ENCODE measurements at regions of chr17 and their contacts with region 1.

Region 1: DNA sequence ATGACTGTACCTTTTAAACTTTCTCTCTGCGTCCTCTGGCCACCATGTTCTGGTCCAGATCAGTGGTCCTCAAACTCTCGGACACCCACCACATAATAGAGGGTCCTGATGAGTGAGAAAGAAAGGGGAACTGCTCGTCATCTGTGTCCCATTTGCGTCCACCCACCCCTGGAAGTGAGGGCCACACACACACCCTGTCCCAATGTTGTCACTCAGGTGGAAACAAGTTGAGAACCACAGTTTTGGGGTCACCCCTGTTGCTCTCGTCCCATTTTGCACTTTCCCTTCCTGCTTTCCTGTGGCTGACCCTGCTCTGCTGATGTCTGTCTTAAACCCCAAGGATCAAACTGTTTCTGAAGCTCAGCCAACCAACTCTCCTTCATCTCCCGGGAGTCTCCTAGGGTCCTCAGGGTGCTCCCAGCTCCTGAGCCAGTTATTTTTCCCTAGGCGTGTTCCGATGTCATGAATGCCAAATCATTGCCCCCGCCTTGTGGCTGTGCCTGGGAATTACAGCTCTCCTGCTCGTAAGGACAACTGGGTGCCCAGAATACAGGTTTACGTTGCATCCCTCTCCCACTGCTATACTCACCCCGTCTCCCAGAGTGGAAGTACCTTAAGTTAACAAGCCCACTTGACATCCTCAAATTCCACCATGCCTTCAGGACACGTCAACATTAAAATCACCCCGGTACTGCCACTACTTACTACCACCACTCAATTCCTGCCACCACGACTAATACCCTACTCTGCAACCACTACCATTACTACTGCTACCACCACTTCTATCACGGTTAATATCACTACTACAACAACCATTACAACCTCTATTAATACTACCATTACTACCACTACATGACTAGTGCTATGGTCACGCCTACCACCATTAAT is 26.0 kb upstream of the HNF1B start:
- DNase-seq: peak; percentile 44
- ATAC-seq: peak; percentile 91
- H3K4me3 ChIP-seq: no peak overlapping the region
- H3K27ac ChIP-seq: no peak overlapping the region
- H3K4me1 ChIP-seq: peaks cover 0 to 7% of the 10 kb centered on the region in 2 experiments; a peak in 1 of 4 replicates
- H3K27me3 ChIP-seq: no peaks in the 10 kb centered on the region
- CTCF ChIP-seq: peak; percentile 74 to 84 (median 81)
- POLR2A ChIP-seq: no peak
- RAD21 ChIP-seq: peak; percentile 85

Region 2: GRCh38 chr17:37527249-37527851 is 243.5 kb before region 1 on chr17:
- CTCF ChIA-PET with region 1: no interaction called
- POLR2A ChIA-PET with region 1: no interaction called
- RAD21 ChIA-PET with region 1: no interaction called
- intact Hi-C with region 1: loop called (anchors 2 kb)
- DNase-seq: peak; percentile 38
- ATAC-seq: peak; percentile 96
- H3K4me3 ChIP-seq: no peak overlapping the region
- H3K27ac ChIP-seq: no peak overlapping the region
- H3K4me1 ChIP-seq: no peaks in the 10 kb centered on the region
- H3K27me3 ChIP-seq: no peaks in the 10 kb centered on the region
- CTCF ChIP-seq: peak; percentile 66 to 83 (median 82); a peak in 5 of 6 replicates
- POLR2A ChIP-seq: no peak
- RAD21 ChIP-seq: peak; percentile 82

Region 3: GRCh38 chr17:37650419-37651003 is 120.4 kb before region 1 on chr17:
- CTCF ChIA-PET with region 1: interaction called, 8 read pairs
- POLR2A ChIA-PET with region 1: no interaction called
- RAD21 ChIA-PET with region 1: no interaction called
- intact Hi-C with region 1: loop called (anchors 1 kb)
- DNase-seq: peak; percentile 41
- ATAC-seq: peak; percentile 78
- H3K4me3 ChIP-seq: no peak overlapping the region
- H3K27ac ChIP-seq: no peak overlapping the region
- H3K4me1 ChIP-seq: no peaks in the 10 kb centered on the region
- H3K27me3 ChIP-seq: peaks cover 24% of the 10 kb centered on the region; the same call in 1 of the 2 replicates
- CTCF ChIP-seq: peak; percentile 49 to 80 (median 76)
- POLR2A ChIP-seq: no peak
- RAD21 ChIP-seq: peak; percentile 82

Region 4: GRCh38 chr17:37701496-37701898 is 69.4 kb before region 1 on chr17:
- CTCF ChIA-PET with region 1: interaction called, 4 read pairs
- POLR2A ChIA-PET with region 1: no interaction called
- RAD21 ChIA-PET with region 1: interaction called in 1 of 2 experiments, 5 read pairs
- intact Hi-C with region 1: loop called (anchors 2 kb)
- DNase-seq: peak; percentile 18
- ATAC-seq: peak; percentile 79
- H3K4me3 ChIP-seq: no peak overlapping the region
- H3K27ac ChIP-seq: no peak overlapping the region
- H3K4me1 ChIP-seq: peaks cover 9 to 40% of the 10 kb centered on the region in 2 experiments
- H3K27me3 ChIP-seq: no peaks in the 10 kb centered on the region
- CTCF ChIP-seq: peak; percentile 57 to 87 (median 81)
- POLR2A ChIP-seq: no peak
- RAD21 ChIP-seq: peak; percentile 63